Caco-2 (cell line): ENCODE measurements at regions of chr18 and their contacts with region 1.

Region 1: DNA sequence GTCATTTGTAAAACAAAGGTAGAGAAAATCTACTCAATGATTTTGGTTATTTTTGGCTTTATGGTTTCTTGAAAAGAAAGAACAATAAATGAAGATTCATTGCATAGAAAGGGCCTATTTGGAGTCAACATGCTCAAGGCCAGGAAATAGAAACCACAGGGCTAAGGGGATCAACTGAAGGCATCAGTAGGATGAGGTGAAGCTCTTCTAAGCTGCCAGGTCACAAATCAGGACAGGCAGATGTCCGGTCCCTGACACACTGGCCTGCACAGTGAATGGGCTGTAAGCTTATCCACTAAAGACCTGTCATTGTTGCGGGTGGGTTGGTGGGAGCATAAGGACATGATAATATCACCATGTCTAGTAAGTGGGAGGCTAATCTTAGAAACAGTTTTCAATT is 31.6 kb upstream of the RNF138 start:
- DNase-seq: no peak
- H3K4me3 ChIP-seq: no peak overlapping the region
- H3K4me3 Mint-ChIP-seq: no peak overlapping the region
- H3K27ac Mint-ChIP-seq: no peak overlapping the region
- H3K4me1 ChIP-seq: no peaks in the 10 kb centered on the region
- H3K4me1 Mint-ChIP-seq: no peaks in the 10 kb centered on the region
- H3K27me3 ChIP-seq: no peaks in the 10 kb centered on the region
- H3K27me3 Mint-ChIP-seq: no peaks in the 10 kb centered on the region
- CTCF ChIP-seq: no peak

Region 2: GRCh38 chr18:32383050-32383819 is 323.2 kb after region 1 on chr18:
- CTCF ChIA-PET with region 1: no interaction called
- POLR2A ChIA-PET with region 1: interaction called, 11 read pairs
- intact Hi-C with region 1: no loop called
- DNase-seq: no peak
- H3K4me3 ChIP-seq: no peak overlapping the region
- H3K4me3 Mint-ChIP-seq: no peak overlapping the region
- H3K27ac Mint-ChIP-seq: no peak overlapping the region
- H3K4me1 ChIP-seq: no peaks in the 10 kb centered on the region
- H3K4me1 Mint-ChIP-seq: no peaks in the 10 kb centered on the region
- H3K27me3 ChIP-seq: no peaks in the 10 kb centered on the region
- H3K27me3 Mint-ChIP-seq: peaks cover 3% of the 10 kb centered on the region
- CTCF ChIP-seq: no peak